ENCODE measurements at regions of chr12 and their contacts with region 1.

Region 1: GRCh38 chr12:53180220-53180930 is at the starts of genes CSAD and ZNF740:
- DNase-seq: peak; percentile 96 to 99 (median 97)
- H3K4me3 ChIP-seq: peak within 1 kb of the TSS; percentile 79
- H3K4me3 Mint-ChIP-seq: peak within 1 kb of the TSS; percentile 89 to 97 (median 93)
- H3K27ac ChIP-seq: peak within 1 kb of the TSS; percentile 86
- H3K27ac Mint-ChIP-seq: peak within 1 kb of the TSS; percentile 88 to 99 (median 96)
- H3K4me1 ChIP-seq: peaks cover 45% of the 10 kb centered on the region
- H3K4me1 Mint-ChIP-seq: peaks cover 51 to 56% (median 54%) of the 10 kb centered on the region in 3 donors
- H3K27me3 ChIP-seq: no peaks in the 10 kb centered on the region
- H3K27me3 Mint-ChIP-seq: no peaks in the 10 kb centered on the region
- total RNA-seq, gene CSAD: 15.8 to 18.7 TPM
- total RNA-seq, gene ZNF740: 50.4 to 52.0 TPM

Region 2: DNA sequence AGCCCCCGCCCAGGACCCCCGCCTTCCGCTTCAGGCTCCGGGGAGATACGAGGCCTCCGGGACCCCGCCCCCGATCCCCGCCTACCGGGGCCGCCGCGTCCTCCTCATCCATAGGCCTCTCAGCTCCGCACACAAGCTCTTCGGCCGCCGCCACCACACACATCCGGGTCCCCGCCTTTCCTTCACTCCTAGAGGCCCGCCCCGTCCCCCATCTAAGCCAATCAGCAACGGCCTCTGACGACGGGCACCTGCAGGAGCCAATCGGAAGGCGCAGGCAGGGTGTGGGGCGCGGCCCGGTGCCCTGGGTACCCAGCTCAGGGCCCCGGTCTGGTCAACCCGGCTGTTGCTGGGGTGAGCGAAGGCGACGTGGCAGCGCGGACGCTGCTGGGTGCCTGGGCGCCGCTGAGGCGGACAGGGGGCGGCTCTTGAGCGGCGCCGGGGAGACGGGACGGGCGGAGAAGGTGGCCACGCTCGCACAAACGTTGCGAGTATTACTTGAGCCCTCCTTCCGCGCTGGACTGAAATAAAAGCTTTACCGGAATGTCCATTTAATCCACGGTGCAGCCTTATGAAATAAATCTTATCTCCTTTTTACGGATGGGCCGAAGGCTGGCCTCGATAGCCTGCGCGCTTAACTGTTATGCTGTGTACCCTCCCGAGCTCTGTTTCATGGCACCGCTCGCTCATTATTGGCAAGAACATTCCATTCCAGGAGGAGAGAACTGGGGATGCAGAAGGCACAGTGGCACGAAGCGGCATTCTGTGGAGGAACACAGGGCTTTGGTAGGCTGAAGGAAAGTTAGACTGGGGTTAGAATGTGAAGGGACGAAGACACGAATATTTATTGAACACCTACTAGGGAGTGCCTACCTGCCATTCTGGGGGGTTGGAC is 100.9 kb before region 1 on chr12 and contains the start of gene SPRYD3:
- CTCF ChIA-PET with region 1: no interaction called
- POLR2A ChIA-PET with region 1: interaction called, 14 read pairs
- DNase-seq: peak; percentile 95 to 98 (median 96)
- H3K4me3 ChIP-seq: peak within 1 kb of the TSS; percentile 87
- H3K4me3 Mint-ChIP-seq: peak within 1 kb of the TSS; percentile 85 to 95 (median 91)
- H3K27ac ChIP-seq: peak within 1 kb of the TSS; percentile 84
- H3K27ac Mint-ChIP-seq: peak within 1 kb of the TSS; percentile 83 to 98 (median 93)
- H3K4me1 ChIP-seq: peaks cover 21% of the 10 kb centered on the region
- H3K4me1 Mint-ChIP-seq: peaks cover 38 to 61% (median 50%) of the 10 kb centered on the region in 3 donors
- H3K27me3 ChIP-seq: no peaks in the 10 kb centered on the region
- H3K27me3 Mint-ChIP-seq: peaks cover 0 to 1% of the 10 kb centered on the region in 2 donors
- total RNA-seq, gene SPRYD3: 40.1 to 43.3 TPM

Region 3: DNA sequence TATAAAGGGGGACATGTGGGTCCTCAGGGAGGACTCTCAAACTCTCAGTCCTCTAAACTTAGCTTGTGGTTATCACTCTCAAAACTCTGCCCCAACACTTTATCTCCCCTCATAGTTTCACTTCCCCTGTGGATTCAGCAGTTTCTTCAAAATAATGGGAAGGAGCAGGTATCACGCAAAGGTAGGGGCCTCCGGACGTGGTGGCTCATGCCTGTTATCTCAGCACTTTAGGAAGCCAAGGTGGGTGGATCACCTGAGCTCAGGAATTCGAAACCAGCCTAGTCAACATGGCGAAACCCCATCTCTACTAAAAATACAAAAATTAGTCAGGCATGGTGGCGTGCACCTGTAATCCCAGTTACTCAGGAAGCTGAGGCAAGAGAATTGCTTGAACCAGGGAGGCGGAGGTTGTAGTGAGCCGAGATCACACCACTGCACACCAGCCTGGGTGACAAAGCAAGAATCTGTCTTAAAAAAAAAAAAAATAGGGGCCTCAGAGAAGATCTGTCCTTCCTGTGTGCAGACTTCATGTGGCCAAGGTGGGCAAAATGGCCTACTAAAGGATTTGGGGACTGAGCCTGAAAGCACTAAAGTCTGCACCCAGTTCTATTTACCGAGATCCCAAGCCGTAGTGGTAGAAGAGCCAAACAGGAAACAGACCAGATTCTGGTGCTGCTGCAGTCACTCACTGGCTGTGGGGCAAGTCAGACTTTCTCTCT is 20.2 kb after region 1 on chr12:
- CTCF ChIA-PET with region 1: interaction called, 18 read pairs
- POLR2A ChIA-PET with region 1: interaction called, 20 read pairs
- DNase-seq: no peak
- H3K4me3 ChIP-seq: peak overlapping the region; percentile 11
- H3K4me3 Mint-ChIP-seq: peak overlapping the region; percentile 57 to 79 (median 75)
- H3K27ac ChIP-seq: peak overlapping the region; percentile 57
- H3K27ac Mint-ChIP-seq: peak overlapping the region; percentile 29 to 94 (median 80)
- H3K4me1 ChIP-seq: peaks cover 90% of the 10 kb centered on the region
- H3K4me1 Mint-ChIP-seq: peaks cover 68 to 86% (median 78%) of the 10 kb centered on the region in 3 donors
- H3K27me3 ChIP-seq: no peaks in the 10 kb centered on the region
- H3K27me3 Mint-ChIP-seq: no peaks in the 10 kb centered on the region

Region 4: DNA sequence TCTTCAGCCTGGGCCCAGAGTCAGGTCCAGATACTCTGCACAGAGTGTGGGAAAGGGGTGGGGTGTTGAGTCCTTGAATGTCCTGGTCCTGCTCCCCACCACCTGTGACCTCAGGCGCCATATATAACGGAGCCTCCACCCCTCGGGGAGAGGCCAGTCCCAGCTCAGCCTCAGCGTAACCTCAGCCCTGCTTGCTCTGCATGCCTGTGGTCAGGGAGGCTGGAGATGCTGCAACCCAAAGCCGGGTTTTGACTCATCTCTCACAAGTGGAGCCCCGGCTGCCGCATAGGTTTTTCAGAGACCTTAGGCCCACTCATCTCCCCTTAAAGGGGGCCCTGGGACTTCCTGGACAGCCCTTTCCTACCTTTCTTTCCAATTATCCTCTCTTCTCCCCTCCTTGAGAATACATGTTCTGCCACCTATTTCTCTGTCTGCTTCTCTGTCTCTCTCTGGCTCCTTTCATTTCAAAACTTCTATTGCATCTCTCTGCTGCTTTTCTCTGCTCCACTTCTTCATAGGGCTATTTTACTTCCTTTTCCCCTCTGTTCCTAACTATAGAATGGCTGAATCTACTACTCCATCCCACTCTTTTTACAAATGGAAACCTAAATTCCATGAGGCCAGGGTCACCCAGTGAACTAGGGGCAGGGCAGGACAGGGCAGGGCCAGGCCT is 25.5 kb after region 1 on chr12:
- CTCF ChIA-PET with region 1: interaction called, 11 read pairs
- POLR2A ChIA-PET with region 1: interaction called, 20 read pairs
- DNase-seq: peak in 3 of 5 donors; percentile 32 to 80 (median 42)
- H3K4me3 ChIP-seq: peak overlapping the region; percentile 93
- H3K4me3 Mint-ChIP-seq: peak overlapping the region; percentile 83 to 98 (median 89)
- H3K27ac ChIP-seq: peak overlapping the region; percentile 55
- H3K27ac Mint-ChIP-seq: peak overlapping the region; percentile 85 to 99 (median 90)
- H3K4me1 ChIP-seq: peaks cover 81% of the 10 kb centered on the region
- H3K4me1 Mint-ChIP-seq: peaks cover 70 to 94% (median 84%) of the 10 kb centered on the region in 3 donors
- H3K27me3 ChIP-seq: no peaks in the 10 kb centered on the region
- H3K27me3 Mint-ChIP-seq: peaks cover 0 to 1% of the 10 kb centered on the region in 2 donors

Region 5: GRCh38 chr12:53267999-53268647 is 87.7 kb after region 1 on chr12 and contains the start of gene ESPL1:
- CTCF ChIA-PET with region 1: interaction called, 16 read pairs
- POLR2A ChIA-PET with region 1: interaction called, 3 read pairs
- DNase-seq: peak; percentile 75 to 88 (median 84)
- H3K4me3 ChIP-seq: peak within 1 kb of the TSS; percentile 83
- H3K4me3 Mint-ChIP-seq: peak within 1 kb of the TSS; percentile 88 to 99 (median 94)
- H3K27ac ChIP-seq: peak within 1 kb of the TSS; percentile 67
- H3K27ac Mint-ChIP-seq: peak within 1 kb of the TSS; percentile 52 to 99 (median 90)
- H3K4me1 ChIP-seq: peaks cover 13% of the 10 kb centered on the region
- H3K4me1 Mint-ChIP-seq: peaks cover 16 to 21% (median 20%) of the 10 kb centered on the region in 3 donors
- H3K27me3 ChIP-seq: no peaks in the 10 kb centered on the region
- H3K27me3 Mint-ChIP-seq: no peaks in the 10 kb centered on the region
- total RNA-seq, gene ESPL1: 58.4 to 63.4 TPM

Region 6: DNA sequence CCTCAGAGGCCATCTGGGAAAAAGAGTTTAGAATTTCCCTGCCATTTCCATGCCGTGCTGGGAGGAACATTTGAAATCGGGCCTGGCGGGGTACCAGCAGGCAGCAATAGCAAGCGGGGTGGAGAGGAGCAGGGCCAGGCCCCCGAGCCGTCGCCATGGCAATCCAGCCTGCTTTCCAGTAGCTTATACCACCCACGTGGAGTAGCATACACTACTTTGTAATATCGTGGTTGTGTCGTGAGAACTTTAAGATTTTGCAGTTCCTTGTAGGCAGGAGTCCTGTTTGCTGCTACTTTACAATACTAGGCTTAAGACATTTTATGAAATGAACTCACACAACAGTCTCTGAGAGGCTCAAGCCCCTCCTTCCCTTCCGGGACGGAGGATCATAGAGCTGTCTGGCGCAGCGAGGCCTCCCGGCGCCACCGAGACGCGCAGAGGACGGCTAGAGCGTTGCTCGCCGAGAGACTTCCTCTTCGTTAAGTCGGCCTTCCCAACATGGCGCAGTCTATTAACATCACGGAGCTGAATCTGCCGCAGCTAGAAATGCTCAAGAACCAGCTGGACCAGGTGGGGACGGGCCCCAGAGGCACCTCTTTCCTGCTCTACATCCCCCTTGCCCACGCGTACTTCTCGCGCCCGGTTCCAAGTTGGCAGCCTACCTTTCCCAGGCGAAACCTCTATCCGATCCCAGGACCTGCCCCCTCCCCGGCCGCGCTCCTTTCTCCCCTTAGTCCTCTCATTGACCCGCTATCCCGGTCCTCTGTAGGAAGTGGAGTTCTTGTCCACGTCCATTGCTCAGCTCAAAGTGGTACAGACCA is 114.9 kb after region 1 on chr12 and contains the start of gene PFDN5:
- CTCF ChIA-PET with region 1: interaction called, 5 read pairs
- POLR2A ChIA-PET with region 1: interaction called, 12 read pairs
- DNase-seq: peak; percentile 72 to 93 (median 87)
- H3K4me3 ChIP-seq: peak within 1 kb of the TSS; percentile 90
- H3K4me3 Mint-ChIP-seq: peak within 1 kb of the TSS; percentile 97 to 100 (median 100)
- H3K27ac ChIP-seq: peak within 1 kb of the TSS; percentile 87
- H3K27ac Mint-ChIP-seq: peak within 1 kb of the TSS; percentile 93 to 100 (median 99)
- H3K4me1 ChIP-seq: peaks cover 41% of the 10 kb centered on the region
- H3K4me1 Mint-ChIP-seq: peaks cover 43 to 53% (median 47%) of the 10 kb centered on the region in 3 donors
- H3K27me3 ChIP-seq: no peaks in the 10 kb centered on the region
- H3K27me3 Mint-ChIP-seq: no peaks in the 10 kb centered on the region
- total RNA-seq, gene PFDN5: 380 to 385 TPM

Region 7: DNA sequence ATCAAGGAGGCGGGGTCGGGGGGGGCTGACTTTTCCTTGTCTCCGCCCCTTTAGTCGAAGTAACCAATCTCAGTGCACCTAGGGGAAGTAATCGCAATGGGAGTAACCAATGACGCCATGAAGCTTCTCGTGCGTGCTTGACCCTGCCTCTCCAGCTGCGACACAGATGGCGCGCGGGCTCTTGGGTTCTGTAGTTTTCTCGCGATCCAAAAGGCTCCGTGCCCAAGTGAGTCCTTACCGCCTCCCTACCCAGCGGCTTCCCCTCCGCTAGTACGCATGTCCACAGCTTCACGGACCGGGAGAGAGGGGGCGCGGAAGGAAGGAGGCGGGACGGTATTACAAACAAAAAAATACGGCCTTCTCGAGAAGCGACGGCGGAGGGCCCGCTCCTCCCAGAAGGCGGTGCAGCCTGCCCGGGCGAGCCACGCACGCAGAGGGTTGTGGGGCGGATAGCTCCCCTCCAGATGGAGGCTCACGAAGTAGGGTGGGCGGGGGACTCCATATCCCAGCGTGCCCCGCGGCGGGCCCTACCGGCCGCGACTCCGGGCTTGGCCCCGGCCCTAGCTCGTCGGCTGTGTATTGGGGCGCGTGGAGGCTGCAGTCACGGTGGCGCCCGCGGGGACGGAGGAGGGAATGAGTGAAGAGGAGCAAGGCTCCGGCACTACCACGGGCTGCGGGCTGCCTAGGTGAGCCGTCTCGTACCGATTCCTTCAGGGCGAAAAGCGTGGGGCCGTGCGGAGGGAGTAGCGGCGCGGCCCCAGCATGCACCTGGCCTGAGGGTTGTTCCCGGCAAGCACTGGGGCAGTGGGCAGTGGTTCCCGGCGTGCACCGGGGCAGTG is 320.6 kb after region 1 on chr12 and contains the start of gene TARBP2:
- CTCF ChIA-PET with region 1: no interaction called
- POLR2A ChIA-PET with region 1: interaction called, 15 read pairs
- DNase-seq: peak; percentile 95 to 99 (median 98)
- H3K4me3 ChIP-seq: peak within 1 kb of the TSS; percentile 66
- H3K4me3 Mint-ChIP-seq: peak within 1 kb of the TSS; percentile 78 to 96 (median 91)
- H3K27ac ChIP-seq: peak within 1 kb of the TSS; percentile 94
- H3K27ac Mint-ChIP-seq: peak within 1 kb of the TSS; percentile 91 to 100 (median 96)
- H3K4me1 ChIP-seq: peaks cover 31% of the 10 kb centered on the region
- H3K4me1 Mint-ChIP-seq: peaks cover 28 to 56% (median 43%) of the 10 kb centered on the region in 3 donors
- H3K27me3 ChIP-seq: no peaks in the 10 kb centered on the region
- H3K27me3 Mint-ChIP-seq: no peaks in the 10 kb centered on the region
- total RNA-seq, gene TARBP2: 62.1 to 65.1 TPM

Measured in CD8-positive, alpha-beta memory T cell (primary cell).